ENCODE measurements at regions of chrX and their contacts with region 1.

Region 1: GRCh38 chrX:72126539-72127140 is 5.1 kb downstream of the RTL5 start:
- DNase-seq: peak; percentile 85
- ATAC-seq: peak; percentile 86
- H3K4me3 Mint-ChIP-seq: no peak overlapping the region
- H3K27ac Mint-ChIP-seq: no peak overlapping the region
- H3K4me1 Mint-ChIP-seq: peaks cover 32% of the 10 kb centered on the region
- H3K27me3 Mint-ChIP-seq: peaks cover 40% of the 10 kb centered on the region

Region 2: DNA sequence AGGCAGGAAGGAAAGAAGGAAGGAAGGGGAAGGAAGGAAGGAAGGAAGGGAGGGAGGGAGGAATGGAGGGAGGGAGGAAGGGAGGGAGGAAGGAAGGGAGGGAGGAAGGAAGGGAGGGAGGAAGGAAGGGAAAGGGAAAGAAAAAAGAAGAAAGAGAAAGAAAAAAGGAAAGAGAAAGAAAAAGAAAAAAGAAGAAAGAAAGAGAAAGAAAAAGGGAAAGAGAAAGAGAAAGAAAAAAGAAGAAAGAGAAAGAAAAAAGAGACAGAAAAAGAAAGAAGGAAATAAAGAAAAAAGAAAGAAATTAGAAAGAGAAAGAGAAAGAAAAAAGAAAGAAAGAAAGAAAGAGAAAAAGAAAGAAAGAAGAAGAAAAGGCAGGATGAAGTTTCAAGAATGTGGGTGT is 231.0 kb before region 1 on chrX:
- CTCF ChIA-PET with region 1: no interaction called
- POLR2A ChIA-PET with region 1: no interaction called
- DNase-seq: no peak
- ATAC-seq: no peak
- H3K4me3 Mint-ChIP-seq: no peak overlapping the region
- H3K27ac Mint-ChIP-seq: no peak overlapping the region
- H3K4me1 Mint-ChIP-seq: no peaks in the 10 kb centered on the region
- H3K27me3 Mint-ChIP-seq: peaks cover 13% of the 10 kb centered on the region

Region 3: DNA sequence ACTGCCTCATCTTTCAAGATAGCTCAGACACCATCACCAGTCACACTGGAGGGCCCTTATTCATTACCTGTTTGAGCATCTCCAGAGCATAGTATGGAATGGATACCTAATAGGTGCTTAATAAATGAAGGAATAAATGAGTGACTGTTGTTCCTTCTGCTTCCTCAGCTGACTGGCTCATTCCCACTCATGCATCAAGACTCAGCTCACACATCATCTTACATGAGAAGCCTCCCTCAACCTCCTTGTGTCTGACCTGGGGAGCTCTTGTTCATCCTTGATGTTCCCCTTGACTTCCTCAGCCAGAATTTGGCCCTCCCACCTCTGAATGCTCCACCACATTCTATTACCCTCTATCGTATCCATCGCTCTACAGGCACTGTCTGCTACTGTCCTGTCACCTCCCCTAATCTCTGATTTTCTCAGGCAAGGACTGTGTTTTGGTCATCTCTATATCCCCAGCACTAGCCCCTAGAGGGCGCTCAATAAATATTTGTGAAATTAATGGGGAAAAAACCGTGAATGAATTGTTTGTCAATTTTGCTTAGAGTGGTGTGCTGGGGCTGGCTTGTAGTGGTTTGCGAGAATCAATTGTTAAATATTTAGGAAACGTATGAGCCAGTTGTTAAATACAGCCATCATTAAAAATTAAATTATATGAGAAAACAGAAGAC is 127.7 kb before region 1 on chrX:
- CTCF ChIA-PET with region 1: interaction called, 18 read pairs
- POLR2A ChIA-PET with region 1: no interaction called
- DNase-seq: peak; percentile 29
- ATAC-seq: peak; percentile 63
- H3K4me3 Mint-ChIP-seq: no peak overlapping the region
- H3K27ac Mint-ChIP-seq: no peak overlapping the region
- H3K4me1 Mint-ChIP-seq: no peaks in the 10 kb centered on the region
- H3K27me3 Mint-ChIP-seq: peaks cover 28% of the 10 kb centered on the region

Region 4: DNA sequence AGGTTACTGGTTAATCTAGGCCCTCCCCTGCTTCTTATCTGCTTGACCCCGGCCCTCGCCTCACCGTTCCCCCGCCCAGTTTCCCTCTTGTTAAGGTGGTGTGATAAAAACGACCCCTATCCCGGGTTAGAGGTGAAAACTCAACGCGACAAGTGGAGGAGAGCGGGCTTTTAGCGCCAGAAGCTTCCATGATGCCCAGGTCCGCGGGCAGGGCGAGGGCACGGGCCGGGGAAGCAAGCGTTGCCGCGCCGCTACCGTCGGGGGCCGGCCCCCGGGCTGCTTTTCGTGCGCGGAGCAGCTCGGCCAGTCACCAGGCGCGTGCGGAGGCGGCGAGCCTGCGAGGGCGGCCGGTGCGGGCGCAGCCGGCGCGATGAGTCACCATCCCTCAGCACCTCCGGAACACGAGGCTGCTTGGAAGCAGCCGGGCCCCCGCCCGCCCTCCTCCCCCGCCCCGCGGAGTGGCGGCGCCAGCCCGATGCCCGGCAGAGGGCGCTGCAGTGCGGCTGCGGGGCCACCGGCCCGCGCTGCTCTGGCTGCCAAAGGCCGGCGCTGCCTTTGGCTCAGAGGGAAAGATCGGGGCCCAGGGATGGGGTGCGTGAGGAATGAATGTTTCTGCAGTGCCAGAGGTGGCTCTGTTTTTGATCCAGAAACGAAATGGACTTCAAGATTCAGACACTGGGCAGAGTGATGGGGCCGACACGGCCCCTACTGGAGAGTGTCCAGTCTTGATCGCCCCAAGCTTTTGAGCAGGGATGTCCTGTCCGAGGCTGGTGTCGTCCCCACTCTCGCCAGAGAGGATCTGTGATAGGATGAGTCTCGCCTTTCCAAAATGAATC is 108.1 kb before region 1 on chrX:
- CTCF ChIA-PET with region 1: interaction called, 118 read pairs
- POLR2A ChIA-PET with region 1: no interaction called
- DNase-seq: peak; percentile 80
- ATAC-seq: peak; percentile 99
- H3K4me3 Mint-ChIP-seq: no peak overlapping the region
- H3K27ac Mint-ChIP-seq: no peak overlapping the region
- H3K4me1 Mint-ChIP-seq: peaks cover 6% of the 10 kb centered on the region
- H3K27me3 Mint-ChIP-seq: peaks cover 48% of the 10 kb centered on the region

Region 5: GRCh38 chrX:72060196-72060920 is 66.3 kb before region 1 on chrX:
- CTCF ChIA-PET with region 1: no interaction called
- POLR2A ChIA-PET with region 1: no interaction called
- DNase-seq: no peak
- ATAC-seq: no peak
- H3K4me3 Mint-ChIP-seq: no peak overlapping the region
- H3K27ac Mint-ChIP-seq: no peak overlapping the region
- H3K4me1 Mint-ChIP-seq: no peaks in the 10 kb centered on the region
- H3K27me3 Mint-ChIP-seq: peaks cover 21% of the 10 kb centered on the region